Ascending aorta (tissue), 2 donors: ENCODE measurements at regions of chr17 and their contacts with region 1.

Region 1: DNA sequence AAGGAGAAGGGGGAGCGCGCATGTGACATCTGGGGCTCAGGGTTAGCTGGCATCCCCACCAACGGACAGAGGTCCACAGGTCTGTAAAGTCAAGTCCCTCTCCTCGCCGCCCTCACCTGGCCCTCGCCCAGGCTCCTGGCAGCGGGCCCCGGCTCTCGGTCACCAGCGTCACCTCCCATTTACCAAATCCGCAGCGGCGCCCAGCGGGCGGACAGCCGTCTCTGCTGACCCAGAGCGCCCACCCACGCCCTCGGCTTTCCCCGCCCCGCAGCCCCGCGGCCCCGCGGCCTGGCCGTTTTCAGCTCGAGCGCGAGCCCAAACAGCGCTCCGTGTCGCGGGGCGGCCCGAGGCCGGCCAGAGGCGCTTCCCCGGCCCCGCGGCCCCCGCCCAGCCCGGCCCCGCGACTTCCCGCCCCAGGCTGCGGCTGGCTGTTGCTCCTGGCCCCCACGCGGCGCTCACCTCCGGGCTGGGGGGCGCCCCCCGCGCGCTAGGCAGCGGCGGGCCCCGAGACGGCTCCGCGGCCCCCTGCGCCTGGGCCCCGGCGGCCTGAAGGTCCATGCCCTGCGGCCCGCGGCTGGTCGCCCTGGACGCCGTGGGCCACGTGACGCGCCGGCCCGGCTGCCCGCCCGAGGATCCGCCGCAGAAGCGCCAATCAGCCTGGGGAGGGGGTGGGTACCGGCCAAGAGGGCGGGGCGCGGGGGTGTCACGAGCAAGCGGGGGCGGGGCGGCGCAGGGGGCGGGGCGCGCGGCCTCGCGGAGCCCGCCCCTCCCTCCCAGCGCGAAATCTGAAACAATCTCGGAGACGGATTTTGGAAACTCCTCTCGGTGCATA is at the start of gene COPRS:
- DNase-seq: peak; percentile 53 to 93
- H3K4me3 ChIP-seq: peak within 1 kb of the TSS; percentile 91 to 97
- H3K27ac ChIP-seq: peak within 1 kb of the TSS; percentile 70 to 92
- H3K4me1 ChIP-seq: peaks cover 8 to 17% of the 10 kb centered on the region in 2 donors
- H3K27me3 ChIP-seq: no peaks in the 10 kb centered on the region
- CTCF ChIP-seq: peak in 1 of 3 experiments; percentile 47
- total RNA-seq, gene COPRS: 92.1 TPM

Region 2: DNA sequence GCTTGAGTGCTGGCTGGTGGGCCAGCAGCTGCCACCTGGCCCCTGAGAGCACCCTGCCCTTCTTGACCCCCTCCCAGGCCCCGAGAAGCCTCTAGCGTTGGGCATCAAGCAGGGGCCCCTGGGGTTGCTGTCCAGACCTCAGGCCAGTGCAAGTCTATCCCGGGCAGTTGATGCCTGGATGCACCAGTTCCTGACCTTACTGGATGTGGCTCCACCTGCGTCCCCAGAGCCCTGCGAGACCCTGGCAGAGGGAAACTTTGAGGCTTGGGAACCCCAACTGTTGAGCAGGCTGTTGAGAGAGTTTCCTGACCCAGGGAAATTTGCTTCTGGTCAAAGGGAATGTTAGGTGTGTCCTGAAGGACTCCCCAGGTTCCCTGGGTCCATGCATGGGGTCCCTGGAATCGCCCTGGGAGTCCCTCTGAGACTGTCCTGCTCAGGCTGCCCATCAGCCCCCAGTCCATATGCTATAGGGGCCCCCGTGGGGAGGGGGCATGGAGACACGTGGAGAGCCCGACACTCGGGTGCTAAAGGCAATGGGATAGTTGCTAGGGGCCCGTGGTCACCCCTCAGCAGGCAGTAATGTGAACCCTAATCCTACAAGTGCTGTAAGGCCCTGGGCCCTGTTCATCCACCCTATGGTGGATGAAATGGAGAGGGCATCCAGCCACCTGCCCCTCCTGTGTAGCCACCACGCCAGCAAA is 421.0 kb before region 1 on chr17:
- intact Hi-C with region 1: loop called (anchors 5 kb)
- DNase-seq: no peak
- H3K4me3 ChIP-seq: no peak overlapping the region
- H3K27ac ChIP-seq: no peak overlapping the region
- H3K4me1 ChIP-seq: no peaks in the 10 kb centered on the region
- H3K27me3 ChIP-seq: no peaks in the 10 kb centered on the region
- CTCF ChIP-seq: no peak

Region 3: DNA sequence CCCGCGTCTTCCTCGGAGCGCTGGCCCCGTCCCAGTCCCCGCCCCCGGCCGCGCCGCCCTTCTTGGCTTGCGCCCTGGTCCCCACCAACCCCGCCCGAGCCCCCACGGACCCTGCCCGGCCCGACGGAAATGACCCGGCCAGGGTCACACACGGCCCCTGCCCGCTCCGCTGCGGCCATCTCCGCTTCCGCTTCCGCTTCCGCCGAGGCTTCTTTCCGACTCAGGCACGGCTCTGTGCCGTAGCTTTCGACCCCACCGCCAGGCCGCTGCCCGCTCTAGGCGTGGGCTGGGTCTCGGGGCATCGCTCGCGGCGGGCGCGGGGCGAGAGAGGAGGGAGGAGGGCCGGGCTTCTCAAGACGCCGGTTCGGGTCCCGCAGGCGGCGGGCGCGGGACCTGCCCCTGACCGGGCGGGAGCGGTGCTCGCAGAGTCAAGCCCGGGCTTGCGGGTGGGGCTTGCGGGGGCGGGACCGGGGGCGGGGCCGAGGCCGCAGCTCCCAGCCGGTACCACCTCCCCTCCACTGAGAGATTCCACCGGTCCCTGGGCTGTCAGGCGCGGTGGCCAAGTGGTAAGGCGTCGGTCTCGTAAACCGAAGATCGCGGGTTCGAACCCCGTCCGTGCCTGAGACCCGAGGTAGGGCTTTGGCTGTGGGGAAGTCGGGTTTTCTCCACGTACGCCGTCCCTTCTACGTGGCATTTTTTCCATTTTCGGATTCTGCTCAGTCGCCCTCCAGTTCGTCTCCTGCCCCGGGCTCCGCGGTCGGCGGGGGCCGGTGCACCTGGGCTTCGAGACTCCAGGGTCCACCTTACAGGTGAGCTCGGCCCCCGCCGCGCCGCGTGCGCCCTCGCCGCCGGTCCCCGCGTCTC is 309.1 kb before region 1 on chr17:
- intact Hi-C with region 1: loop called (anchors 2 kb)
- DNase-seq: peak; percentile 73 to 95
- H3K4me3 ChIP-seq: peak overlapping the region; percentile 91 to 93
- H3K27ac ChIP-seq: peak overlapping the region; percentile 95 to 96
- H3K4me1 ChIP-seq: peaks cover 0 to 9% of the 10 kb centered on the region in 2 donors
- H3K27me3 ChIP-seq: no peaks in the 10 kb centered on the region
- CTCF ChIP-seq: no peak

Region 4: DNA sequence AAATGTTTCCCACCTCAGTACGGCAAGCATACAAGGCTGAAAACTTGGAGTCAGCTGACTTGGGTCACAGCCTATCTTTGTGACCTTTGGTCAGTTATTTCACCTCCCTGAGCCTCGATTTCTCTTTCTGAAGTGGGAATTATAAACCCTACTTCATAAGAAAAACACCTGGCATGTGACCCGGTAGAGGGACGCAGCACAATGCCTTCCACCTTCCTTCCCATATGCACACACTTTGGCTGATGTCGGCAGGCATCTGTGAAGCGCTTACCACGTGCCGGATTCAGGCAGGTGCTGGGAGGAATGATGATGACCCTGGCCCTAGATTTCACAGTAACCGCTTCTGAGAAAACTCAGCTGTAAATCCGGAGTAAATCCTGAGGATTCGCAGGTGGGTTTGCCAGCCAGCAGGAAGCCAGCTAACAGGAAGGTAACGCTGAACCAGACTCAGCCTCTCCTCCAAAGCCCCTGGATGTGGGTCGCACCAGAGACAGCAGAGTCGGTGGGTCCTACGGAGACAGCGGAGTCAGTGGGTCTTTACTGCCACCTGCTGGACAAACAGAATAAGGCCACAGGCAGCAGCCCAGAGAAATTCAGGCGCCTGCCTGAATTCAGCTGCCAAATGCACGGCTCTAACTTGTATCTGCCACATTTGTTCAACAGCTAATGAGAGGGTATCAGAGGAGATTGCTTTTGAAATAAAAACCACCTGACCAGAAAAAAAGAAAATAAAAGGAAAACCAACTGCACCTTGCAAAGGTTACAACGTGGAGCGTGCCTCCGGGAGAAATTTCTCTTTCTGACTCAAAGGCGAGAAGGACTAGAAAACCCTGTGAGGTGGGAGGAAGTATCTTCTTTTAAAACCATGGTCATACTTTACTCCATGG is 16.4 kb before region 1 on chr17:
- intact Hi-C with region 1: loop called (anchors 2 kb)
- DNase-seq: peak in 1 of 2 donors; percentile 85
- H3K4me3 ChIP-seq: peak overlapping the region in 1 of 2 donors; percentile 49
- H3K27ac ChIP-seq: peak overlapping the region; percentile 67 to 74
- H3K4me1 ChIP-seq: peaks cover 10 to 24% of the 10 kb centered on the region in 2 donors
- H3K27me3 ChIP-seq: no peaks in the 10 kb centered on the region
- CTCF ChIP-seq: peak; percentile 96 to 99 (median 96)

Region 5: DNA sequence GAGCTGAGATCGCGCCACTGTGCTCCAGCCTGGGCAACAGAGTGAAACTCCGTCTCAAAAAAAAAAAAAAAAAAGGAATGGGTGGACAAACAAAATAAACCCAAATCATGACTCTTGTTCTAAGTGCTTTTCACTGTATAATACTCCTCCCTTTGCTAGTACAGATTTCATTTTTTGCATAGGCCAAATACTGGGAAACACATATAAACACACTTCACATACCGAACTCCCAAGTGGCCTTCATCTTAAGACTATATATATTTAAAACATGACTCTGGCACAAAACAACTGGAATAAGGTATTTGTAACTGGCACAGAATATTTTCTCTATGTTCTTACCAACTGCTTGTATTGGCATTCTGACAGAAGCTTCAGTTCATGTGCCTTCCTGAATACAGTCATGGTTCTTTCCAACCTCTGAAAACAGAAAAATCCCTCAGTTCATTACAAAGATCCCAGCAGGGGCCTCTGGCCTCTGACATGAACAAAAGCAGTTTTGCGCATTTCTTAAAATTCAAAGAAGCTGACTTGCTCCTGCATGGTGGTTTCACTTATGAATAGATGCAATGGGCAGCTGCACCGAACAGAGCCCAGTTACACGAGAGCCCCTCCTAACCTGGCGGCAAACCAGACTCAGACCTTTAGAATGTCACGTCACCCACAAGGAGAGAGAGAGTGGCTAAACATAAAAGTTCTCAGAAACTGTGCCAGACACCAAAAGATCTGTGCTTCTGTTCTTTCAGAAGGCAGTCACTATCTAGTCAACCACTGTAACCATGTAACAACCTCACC is 19.2 kb after region 1 on chr17:
- intact Hi-C with region 1: loop called (anchors 2 kb)
- DNase-seq: peak in 1 of 2 donors; percentile 65
- H3K4me3 ChIP-seq: peak overlapping the region in 1 of 2 donors; percentile 7
- H3K27ac ChIP-seq: peak overlapping the region; percentile 78 to 86
- H3K4me1 ChIP-seq: peaks cover 0 to 13% of the 10 kb centered on the region in 2 donors
- H3K27me3 ChIP-seq: no peaks in the 10 kb centered on the region
- CTCF ChIP-seq: no peak

Region 6: DNA sequence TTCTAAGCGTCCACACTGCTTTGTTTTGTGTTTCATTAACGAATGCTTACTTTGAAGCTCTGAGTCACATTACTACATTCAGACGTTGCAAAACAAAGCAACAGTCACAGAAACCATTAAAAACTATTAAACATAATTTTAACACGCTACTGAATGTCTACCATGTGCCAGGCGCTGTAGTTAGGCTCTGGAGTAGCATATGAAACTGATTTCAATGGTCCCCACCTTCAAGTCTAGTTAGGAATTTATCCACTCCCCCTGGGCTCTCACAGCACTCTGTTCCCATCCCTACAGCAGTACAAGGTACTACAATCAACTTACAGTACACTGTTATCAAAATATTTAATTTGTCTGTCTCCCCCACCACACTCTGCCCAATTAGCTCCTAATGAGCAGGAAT is 42.0 kb after region 1 on chr17:
- intact Hi-C with region 1: loop called (anchors 1 kb)
- DNase-seq: no peak
- H3K4me3 ChIP-seq: peak overlapping the region; percentile 73 to 90
- H3K27ac ChIP-seq: peak overlapping the region; percentile 56 to 72
- H3K4me1 ChIP-seq: peaks cover 4 to 9% of the 10 kb centered on the region in 2 donors
- H3K27me3 ChIP-seq: no peaks in the 10 kb centered on the region
- CTCF ChIP-seq: no peak